ENCODE measurements at regions of chr11 and their contacts with region 1.

Region 1: GRCh38 chr11:19071255-19071654 is 10.7 kb upstream of the MRGPRX2 start:
- DNase-seq: peak in 8 of 9 donors; percentile 27 to 51 (median 38)
- ATAC-seq: peak; percentile 93
- H3K4me3 ChIP-seq: no peak overlapping the region
- H3K4me3 Mint-ChIP-seq: peak overlapping the region in 8 of 10 donors; percentile 37 to 83 (median 64)
- H3K27ac ChIP-seq: no peak overlapping the region
- H3K27ac Mint-ChIP-seq: no peak overlapping the region
- H3K4me1 ChIP-seq: no peaks in the 10 kb centered on the region
- H3K4me1 Mint-ChIP-seq: peaks cover 0 to 5% (median 5%) of the 10 kb centered on the region in 7 donors
- H3K27me3 ChIP-seq: no peaks in the 10 kb centered on the region
- H3K27me3 Mint-ChIP-seq: peaks cover 14 to 33% (median 20%) of the 10 kb centered on the region in 5 donors

Region 2: DNA sequence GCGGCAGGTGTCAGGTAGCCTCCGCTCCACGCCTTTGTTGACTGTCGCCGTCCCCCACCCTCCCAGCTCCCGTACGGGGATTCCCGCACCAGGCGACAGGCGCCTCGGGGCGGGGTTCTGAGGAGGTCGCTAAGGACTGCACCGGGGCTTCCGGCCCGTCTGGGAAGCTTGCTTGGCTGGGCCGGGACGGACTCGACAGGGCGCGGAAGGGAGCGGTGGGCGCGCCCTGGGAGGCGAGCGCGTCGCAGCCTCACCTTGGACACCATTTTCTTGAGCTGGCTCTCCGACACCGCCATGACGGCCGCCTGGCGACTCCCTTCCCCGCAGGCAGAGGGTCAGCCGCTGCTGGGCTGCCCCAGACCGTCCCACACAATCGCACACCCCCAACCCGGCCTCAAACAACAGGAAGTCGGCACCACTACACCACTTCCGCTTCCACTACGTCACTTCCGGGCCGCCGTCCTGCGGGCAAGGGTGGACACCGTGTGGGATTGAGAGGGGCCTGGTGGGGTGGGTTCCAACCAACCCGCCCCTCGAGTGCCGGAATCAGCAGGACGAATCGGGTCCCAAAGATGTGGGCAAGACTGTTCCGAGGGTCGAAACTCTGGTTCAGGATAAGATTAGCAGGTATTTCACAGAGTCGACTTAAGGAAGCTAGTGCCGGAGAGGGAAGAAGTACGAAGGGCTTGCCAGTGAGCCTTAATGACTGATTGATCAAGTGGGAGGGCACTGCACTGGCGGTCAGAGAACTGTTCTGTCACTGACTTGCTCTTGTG is 544.5 kb before region 1 on chr11 and contains the start of gene TSG101:
- CTCF ChIA-PET with region 1: no interaction called
- POLR2A ChIA-PET with region 1: no interaction called
- intact Hi-C with region 1: no loop called
- DNase-seq: peak; percentile 86 to 96 (median 91)
- ATAC-seq: peak; percentile 91
- H3K4me3 ChIP-seq: peak within 1 kb of the TSS; percentile 94
- H3K4me3 Mint-ChIP-seq: peak within 1 kb of the TSS; percentile 93 to 100 (median 100)
- H3K27ac ChIP-seq: peak within 1 kb of the TSS; percentile 96
- H3K27ac Mint-ChIP-seq: peak within 1 kb of the TSS; percentile 99 to 100 (median 100)
- H3K4me1 ChIP-seq: peaks cover 18% of the 10 kb centered on the region in 2 donors
- H3K4me1 Mint-ChIP-seq: peaks cover 28 to 67% (median 55%) of the 10 kb centered on the region in 7 donors
- H3K27me3 ChIP-seq: no peaks in the 10 kb centered on the region
- H3K27me3 Mint-ChIP-seq: peaks cover 0 to 3% (median 0%) of the 10 kb centered on the region in 5 donors
- total RNA-seq, gene TSG101: 16.8 to 46.3 (median 36.3) TPM

Region 3: DNA sequence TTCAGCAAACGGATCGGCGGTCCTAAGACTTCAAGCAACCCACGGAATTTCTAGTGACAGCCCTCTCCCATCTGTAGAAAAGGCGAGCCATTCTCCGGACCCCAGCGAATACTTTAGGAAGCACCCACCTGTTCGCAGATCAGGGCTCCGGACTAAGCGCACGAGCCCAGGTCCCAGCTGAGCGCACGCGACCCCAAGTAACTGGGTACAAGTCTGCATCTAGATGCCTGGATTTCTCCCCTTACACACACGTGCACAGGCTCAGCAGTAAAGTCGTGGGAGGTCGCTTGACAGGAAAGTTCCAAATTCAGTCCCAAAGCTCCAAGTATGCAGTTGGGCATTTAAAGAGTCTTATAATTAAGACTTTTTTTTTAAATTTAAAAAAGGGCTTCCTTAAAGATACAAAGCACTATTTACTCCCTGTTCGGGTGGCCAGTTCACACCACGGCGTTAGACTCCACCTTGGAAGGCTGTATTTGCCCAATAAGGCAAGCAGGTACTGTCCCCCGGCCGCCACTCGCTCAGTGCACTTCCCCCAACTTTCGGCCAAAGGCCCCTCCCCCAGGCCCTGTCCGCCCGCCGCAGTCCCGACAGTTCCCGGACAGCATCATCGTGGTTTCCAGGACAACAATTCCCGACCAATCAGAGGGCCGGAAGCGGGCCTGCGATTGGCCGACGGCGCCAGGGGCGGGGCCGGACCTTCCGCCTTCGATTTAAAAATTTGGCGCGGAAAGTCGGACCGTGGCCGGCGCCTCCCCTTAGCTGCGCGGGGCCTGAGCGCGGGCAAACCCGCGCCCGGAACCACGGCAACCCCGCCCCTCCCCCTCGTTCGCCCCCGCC is 169.4 kb after region 1 on chr11 and contains the start of gene E2F8:
- CTCF ChIA-PET with region 1: no interaction called
- POLR2A ChIA-PET with region 1: no interaction called
- intact Hi-C with region 1: loop called (anchors 1 to 5 kb)
- DNase-seq: peak; percentile 42 to 95 (median 62)
- ATAC-seq: peak; percentile 86
- H3K4me3 ChIP-seq: peak within 1 kb of the TSS; percentile 75
- H3K4me3 Mint-ChIP-seq: peak within 1 kb of the TSS; percentile 73 to 97 (median 85)
- H3K27ac ChIP-seq: no peak within 1 kb of the TSS
- H3K27ac Mint-ChIP-seq: peak within 1 kb of the TSS in 2 of 9 donors; percentile 41 to 85
- H3K4me1 ChIP-seq: peaks cover 12 to 13% of the 10 kb centered on the region in 2 donors
- H3K4me1 Mint-ChIP-seq: peaks cover 8 to 49% (median 22%) of the 10 kb centered on the region in 7 donors
- H3K27me3 ChIP-seq: peaks cover 8 to 25% of the 10 kb centered on the region in 2 donors
- H3K27me3 Mint-ChIP-seq: peaks cover 6 to 43% (median 35%) of the 10 kb centered on the region in 5 donors
- total RNA-seq, gene E2F8: 0.17 to 25.4 TPM in 2 of 5 experiments, not detected in the others

Region 4: GRCh38 chr11:19553683-19554333 is 482.6 kb after region 1 on chr11:
- CTCF ChIA-PET with region 1: no interaction called
- POLR2A ChIA-PET with region 1: no interaction called
- intact Hi-C with region 1: loop called in 1 of 2 experiments (anchors 1 kb)
- DNase-seq: peak; percentile 12 to 68 (median 38)
- ATAC-seq: peak; percentile 65
- H3K4me3 ChIP-seq: no peak overlapping the region
- H3K4me3 Mint-ChIP-seq: no peak overlapping the region
- H3K27ac ChIP-seq: no peak overlapping the region
- H3K27ac Mint-ChIP-seq: no peak overlapping the region
- H3K4me1 ChIP-seq: no peaks in the 10 kb centered on the region
- H3K4me1 Mint-ChIP-seq: peaks cover 0 to 4% (median 0%) of the 10 kb centered on the region in 7 donors
- H3K27me3 ChIP-seq: no peaks in the 10 kb centered on the region
- H3K27me3 Mint-ChIP-seq: peaks cover 6 to 17% (median 9%) of the 10 kb centered on the region in 5 donors

Region 5: GRCh38 chr11:19742588-19743292 is 671.5 kb after region 1 on chr11:
- CTCF ChIA-PET with region 1: interaction called, 3 read pairs
- POLR2A ChIA-PET with region 1: no interaction called
- intact Hi-C with region 1: loop called (anchors 1 to 10 kb)
- DNase-seq: peak; percentile 8 to 57 (median 40)
- ATAC-seq: peak; percentile 81
- H3K4me3 ChIP-seq: no peak overlapping the region
- H3K4me3 Mint-ChIP-seq: no peak overlapping the region
- H3K27ac ChIP-seq: no peak overlapping the region
- H3K27ac Mint-ChIP-seq: no peak overlapping the region
- H3K4me1 ChIP-seq: no peaks in the 10 kb centered on the region
- H3K4me1 Mint-ChIP-seq: no peaks in the 10 kb centered on the region
- H3K27me3 ChIP-seq: no peaks in the 10 kb centered on the region
- H3K27me3 Mint-ChIP-seq: peaks cover 0 to 12% (median 0%) of the 10 kb centered on the region in 5 donors

Region 6: DNA sequence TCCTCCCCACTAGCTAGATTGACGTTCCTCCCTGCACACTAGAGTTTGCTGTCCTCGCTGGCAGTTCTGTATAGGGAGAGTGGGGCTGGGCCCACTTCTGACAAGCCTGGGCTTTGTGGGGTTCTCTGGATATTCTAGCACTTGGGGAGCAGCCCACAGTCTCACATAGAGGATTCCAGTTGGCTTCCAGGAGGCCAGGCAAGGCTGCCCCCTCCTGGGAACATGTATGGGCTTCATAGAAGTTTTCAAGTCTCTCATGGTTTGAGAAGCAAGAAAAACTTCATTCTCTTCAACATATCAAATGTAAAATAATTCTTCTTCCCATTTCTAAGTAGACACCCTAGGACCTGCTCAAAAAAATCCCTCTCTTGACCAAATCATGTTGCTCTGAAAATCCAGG is 728.9 kb after region 1 on chr11:
- CTCF ChIA-PET with region 1: no interaction called
- POLR2A ChIA-PET with region 1: no interaction called
- intact Hi-C with region 1: loop called in 1 of 2 experiments (anchors 10 kb)
- DNase-seq: no peak
- ATAC-seq: no peak
- H3K4me3 ChIP-seq: no peak overlapping the region
- H3K4me3 Mint-ChIP-seq: no peak overlapping the region
- H3K27ac ChIP-seq: no peak overlapping the region
- H3K27ac Mint-ChIP-seq: no peak overlapping the region
- H3K4me1 ChIP-seq: no peaks in the 10 kb centered on the region
- H3K4me1 Mint-ChIP-seq: no peaks in the 10 kb centered on the region
- H3K27me3 ChIP-seq: no peaks in the 10 kb centered on the region
- H3K27me3 Mint-ChIP-seq: peaks cover 6 to 31% (median 13%) of the 10 kb centered on the region in 5 donors

Region 7: DNA sequence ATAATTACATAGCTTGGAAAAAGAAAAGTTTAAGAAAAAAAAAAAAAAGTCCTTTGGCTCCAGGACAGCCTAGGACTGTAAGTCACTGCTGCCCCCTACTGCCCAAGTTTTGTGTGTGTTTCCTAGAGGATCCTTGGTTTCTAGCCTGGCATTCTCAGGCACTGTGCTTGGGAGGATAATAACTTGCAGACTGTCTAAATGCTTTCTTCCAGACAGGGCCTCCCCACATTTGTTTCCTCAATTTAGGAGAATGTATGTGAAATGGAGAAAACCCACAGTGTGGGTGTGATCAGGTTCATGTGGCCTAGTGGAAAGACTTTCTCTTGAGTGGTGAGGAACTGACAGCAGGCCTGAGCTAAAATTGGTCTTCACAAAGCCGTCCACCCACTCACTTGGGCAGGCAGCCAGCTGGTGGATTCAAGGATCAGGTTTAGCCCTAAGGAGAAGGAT is 832.4 kb after region 1 on chr11:
- CTCF ChIA-PET with region 1: no interaction called
- POLR2A ChIA-PET with region 1: no interaction called
- intact Hi-C with region 1: loop called in 1 of 2 experiments (anchors 10 kb)
- DNase-seq: peak in 4 of 9 donors; percentile 1 to 23 (median 4)
- ATAC-seq: no peak
- H3K4me3 ChIP-seq: no peak overlapping the region
- H3K4me3 Mint-ChIP-seq: no peak overlapping the region
- H3K27ac ChIP-seq: no peak overlapping the region
- H3K27ac Mint-ChIP-seq: no peak overlapping the region
- H3K4me1 ChIP-seq: no peaks in the 10 kb centered on the region
- H3K4me1 Mint-ChIP-seq: no peaks in the 10 kb centered on the region
- H3K27me3 ChIP-seq: no peaks in the 10 kb centered on the region
- H3K27me3 Mint-ChIP-seq: peaks cover 0 to 9% (median 0%) of the 10 kb centered on the region in 5 donors

Measured in naive thymus-derived CD4-positive, alpha-beta T cell (primary cell).